Activated B cell treated with CpG ODN at 0.5 μM for 24 hours (primary cell): ENCODE measurements at regions of chr4 and their contacts with region 1.

Region 1: DNA sequence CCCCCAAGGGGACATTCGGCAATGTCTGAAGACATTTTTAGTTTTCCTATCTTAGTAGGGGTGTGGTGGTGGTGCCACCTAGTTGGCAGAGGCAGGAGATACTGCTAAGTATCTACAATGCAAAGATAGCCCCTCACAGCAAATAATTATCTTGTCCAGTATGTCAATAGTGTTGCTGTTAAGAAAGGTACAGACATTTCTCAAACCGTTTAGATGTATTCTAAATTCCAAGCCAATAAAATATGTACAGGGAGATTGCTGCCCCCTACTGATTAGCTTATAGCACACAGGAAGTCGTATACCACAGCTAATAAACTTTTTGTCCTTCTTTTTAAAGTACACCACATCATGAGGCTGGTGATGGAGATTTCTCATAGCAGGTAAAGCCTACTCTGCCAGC is 260.5 kb downstream of the TMA16 start:
- DNase-seq: no peak
- ATAC-seq: peak; percentile 56
- H3K4me3 Mint-ChIP-seq: peak overlapping the region; percentile 8
- H3K27ac Mint-ChIP-seq: no peak overlapping the region
- H3K4me1 Mint-ChIP-seq: peaks cover 3% of the 10 kb centered on the region
- H3K27me3 Mint-ChIP-seq: peaks cover 4% of the 10 kb centered on the region
- CTCF ChIP-seq: no peak

Region 2: DNA sequence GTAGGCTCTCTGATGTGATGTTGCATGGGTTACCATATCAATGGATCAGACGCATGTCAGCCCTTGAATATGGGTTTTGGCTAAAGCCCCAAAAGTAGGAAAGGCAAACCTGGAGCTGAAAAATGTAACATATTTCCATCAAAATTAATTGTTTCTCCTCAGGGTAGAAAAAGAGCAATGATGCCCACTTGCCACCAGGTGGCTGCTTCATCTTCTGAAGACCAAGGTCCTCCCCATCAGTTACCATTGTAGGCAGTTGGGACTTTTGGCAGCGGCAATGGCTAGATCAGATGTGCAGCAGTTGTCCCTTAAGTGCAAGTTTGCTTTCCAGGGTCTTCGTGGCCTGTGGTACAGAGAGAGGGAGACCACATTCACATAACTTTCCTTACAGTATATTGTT is 706.6 kb before region 1 on chr4:
- CTCF ChIA-PET with region 1: no interaction called
- POLR2A ChIA-PET with region 1: no interaction called
- intact Hi-C with region 1: loop called (anchors 2 kb)
- DNase-seq: no peak
- ATAC-seq: no peak
- H3K4me3 Mint-ChIP-seq: no peak overlapping the region
- H3K27ac Mint-ChIP-seq: no peak overlapping the region
- H3K4me1 Mint-ChIP-seq: no peaks in the 10 kb centered on the region
- H3K27me3 Mint-ChIP-seq: peaks cover 4% of the 10 kb centered on the region
- CTCF ChIP-seq: no peak

Region 3: GRCh38 chr4:163166041-163166579 is 588.9 kb before region 1 on chr4:
- CTCF ChIA-PET with region 1: no interaction called
- POLR2A ChIA-PET with region 1: no interaction called
- intact Hi-C with region 1: loop called (anchors 5 kb)
- DNase-seq: peak; percentile 63
- ATAC-seq: peak; percentile 64
- H3K4me3 Mint-ChIP-seq: peak overlapping the region; percentile 91
- H3K27ac Mint-ChIP-seq: peak overlapping the region; percentile 95
- H3K4me1 Mint-ChIP-seq: peaks cover 27% of the 10 kb centered on the region
- H3K27me3 Mint-ChIP-seq: no peaks in the 10 kb centered on the region
- CTCF ChIP-seq: no peak

Region 4: GRCh38 chr4:163795885-163796284 is 40.9 kb after region 1 on chr4:
- CTCF ChIA-PET with region 1: no interaction called
- POLR2A ChIA-PET with region 1: no interaction called
- intact Hi-C with region 1: no loop called
- DNase-seq: no peak
- ATAC-seq: no peak
- H3K4me3 Mint-ChIP-seq: no peak overlapping the region
- H3K27ac Mint-ChIP-seq: no peak overlapping the region
- H3K4me1 Mint-ChIP-seq: no peaks in the 10 kb centered on the region
- H3K27me3 Mint-ChIP-seq: peaks cover 15% of the 10 kb centered on the region
- CTCF ChIP-seq: no peak

Region 5: DNA sequence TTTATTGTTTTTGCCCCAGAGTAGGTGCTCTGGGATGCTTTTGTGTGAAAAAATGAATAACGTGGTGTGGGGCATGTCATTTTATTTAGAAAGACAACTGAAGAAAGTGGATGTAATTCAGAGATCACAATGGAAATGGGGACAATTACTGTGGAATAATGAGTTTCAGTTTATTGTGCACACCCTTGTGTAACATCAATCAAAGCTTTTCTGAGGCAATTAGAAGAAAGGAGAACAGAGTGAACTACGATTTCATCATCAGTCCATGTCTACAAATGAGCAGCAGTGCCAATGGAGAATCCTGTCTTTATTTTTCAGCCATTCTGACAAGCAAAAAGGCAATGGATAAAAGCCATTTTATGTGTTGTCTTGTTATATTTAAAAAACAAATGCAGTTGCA is 78.7 kb after region 1 on chr4:
- CTCF ChIA-PET with region 1: no interaction called
- POLR2A ChIA-PET with region 1: no interaction called
- intact Hi-C with region 1: no loop called
- DNase-seq: no peak
- ATAC-seq: no peak
- H3K4me3 Mint-ChIP-seq: no peak overlapping the region
- H3K27ac Mint-ChIP-seq: no peak overlapping the region
- H3K4me1 Mint-ChIP-seq: no peaks in the 10 kb centered on the region
- H3K27me3 Mint-ChIP-seq: no peaks in the 10 kb centered on the region
- CTCF ChIP-seq: no peak

Region 6: DNA sequence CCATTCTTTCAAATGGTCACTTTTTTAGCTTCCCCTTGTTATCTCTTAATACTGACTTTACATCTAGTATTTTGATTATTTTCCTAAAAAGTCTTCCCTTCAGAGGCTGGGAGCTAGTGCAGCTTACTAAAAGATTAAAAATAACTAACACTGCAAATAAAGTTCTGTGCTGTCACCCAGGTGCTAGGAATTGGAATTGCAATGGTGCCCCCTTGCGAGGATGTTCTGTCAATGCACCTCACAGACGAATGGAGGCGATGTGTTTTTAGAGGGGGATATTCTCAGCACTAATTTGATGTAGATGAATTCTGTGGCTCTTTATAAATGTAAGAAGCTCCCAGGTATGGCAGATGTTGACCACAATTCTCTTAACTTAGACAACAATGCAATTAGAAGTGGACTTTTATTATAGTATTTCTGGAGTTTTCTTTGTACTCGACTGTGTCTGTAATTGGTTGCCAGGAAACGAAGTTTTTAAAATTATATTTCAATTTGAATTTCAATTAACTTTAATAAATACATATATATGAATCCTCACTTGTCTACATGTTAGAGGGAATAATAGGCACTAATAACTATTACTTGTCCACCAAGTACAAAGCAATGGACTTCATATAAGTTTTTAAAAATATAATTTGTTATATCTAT is 976.9 kb after region 1 on chr4:
- CTCF ChIA-PET with region 1: no interaction called
- POLR2A ChIA-PET with region 1: no interaction called
- intact Hi-C with region 1: loop called (anchors 5 kb)
- DNase-seq: peak; percentile 15
- ATAC-seq: peak; percentile 54
- H3K4me3 Mint-ChIP-seq: no peak overlapping the region
- H3K27ac Mint-ChIP-seq: no peak overlapping the region
- H3K4me1 Mint-ChIP-seq: no peaks in the 10 kb centered on the region
- H3K27me3 Mint-ChIP-seq: no peaks in the 10 kb centered on the region
- CTCF ChIP-seq: peak; percentile 89